ENCODE measurements at regions of chr12 and their contacts with region 1.

Region 1: GRCh38 chr12:48197971-48198671 is 5.0 kb downstream of the OR10AD1 start:
- DNase-seq: peak; percentile 97
- ATAC-seq: peak; percentile 98
- H3K4me3 Mint-ChIP-seq: peak overlapping the region; percentile 80
- H3K27ac Mint-ChIP-seq: peak overlapping the region; percentile 99
- H3K4me1 Mint-ChIP-seq: peaks cover 30% of the 10 kb centered on the region
- H3K27me3 Mint-ChIP-seq: peaks cover 4% of the 10 kb centered on the region

Region 2: DNA sequence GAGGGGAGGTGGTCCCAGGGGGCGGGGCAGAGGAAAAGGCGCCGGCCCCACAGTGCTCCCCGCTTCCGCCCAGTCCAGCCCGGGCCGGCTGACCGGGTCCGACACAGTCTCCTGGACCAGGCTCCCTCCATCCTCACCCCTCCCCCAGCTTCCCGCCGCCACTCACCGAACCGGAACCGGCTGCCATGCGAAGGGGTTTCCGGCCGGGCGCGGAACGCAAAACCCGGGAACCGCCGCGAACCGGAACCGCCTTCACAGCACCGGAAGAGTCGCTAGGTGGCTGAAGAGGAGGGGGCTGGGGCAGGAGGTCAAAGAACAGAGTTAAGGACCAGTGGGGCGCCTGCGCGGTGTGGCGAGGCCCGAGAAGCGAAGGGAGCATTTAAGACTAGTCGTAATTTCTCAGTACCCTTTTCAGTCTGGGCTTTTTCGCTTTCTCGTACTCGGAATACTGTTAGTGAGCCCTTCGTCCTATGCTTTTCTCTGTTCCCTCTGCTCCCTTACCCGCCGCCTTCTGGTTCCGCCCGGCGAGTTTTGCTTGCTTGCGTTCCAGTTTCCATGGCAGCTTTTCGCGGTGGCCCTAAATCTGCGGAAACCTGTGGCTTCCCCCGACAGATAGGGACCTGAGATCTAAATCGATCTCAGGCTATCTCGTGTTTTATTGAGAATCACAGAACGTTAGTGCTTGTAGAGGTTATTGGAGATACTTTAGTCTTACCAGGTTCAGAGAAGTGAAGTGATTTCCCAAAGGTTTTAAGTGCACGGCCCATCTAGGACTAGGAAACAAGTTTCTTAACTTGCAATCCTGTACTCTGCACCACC is 92.0 kb before region 1 on chr12 and contains the start of gene SENP1:
- CTCF ChIA-PET with region 1: interaction called, 3 read pairs
- POLR2A ChIA-PET with region 1: no interaction called
- intact Hi-C with region 1: loop called in 1 of 2 experiments (anchors 1 kb)
- DNase-seq: peak; percentile 94
- ATAC-seq: peak; percentile 87
- H3K4me3 Mint-ChIP-seq: peak within 1 kb of the TSS; percentile 95
- H3K27ac Mint-ChIP-seq: peak within 1 kb of the TSS; percentile 98
- H3K4me1 Mint-ChIP-seq: peaks cover 46% of the 10 kb centered on the region
- H3K27me3 Mint-ChIP-seq: no peaks in the 10 kb centered on the region
- total RNA-seq, gene SENP1: 44.4 to 61.8 TPM

Region 3: GRCh38 chr12:48183091-48183875 is 14.8 kb before region 1 on chr12 and contains the start of gene CCDC184:
- CTCF ChIA-PET with region 1: interaction called, 15 read pairs
- POLR2A ChIA-PET with region 1: interaction called, 3 read pairs
- intact Hi-C with region 1: loop called (anchors 1 to 2 kb)
- DNase-seq: peak; percentile 78
- ATAC-seq: peak; percentile 80
- H3K4me3 Mint-ChIP-seq: peak within 1 kb of the TSS; percentile 81
- H3K27ac Mint-ChIP-seq: peak within 1 kb of the TSS; percentile 31
- H3K4me1 Mint-ChIP-seq: peaks cover 20% of the 10 kb centered on the region
- H3K27me3 Mint-ChIP-seq: peaks cover 34% of the 10 kb centered on the region
- total RNA-seq, gene CCDC184: 0.25 to 0.37 TPM

Region 4: DNA sequence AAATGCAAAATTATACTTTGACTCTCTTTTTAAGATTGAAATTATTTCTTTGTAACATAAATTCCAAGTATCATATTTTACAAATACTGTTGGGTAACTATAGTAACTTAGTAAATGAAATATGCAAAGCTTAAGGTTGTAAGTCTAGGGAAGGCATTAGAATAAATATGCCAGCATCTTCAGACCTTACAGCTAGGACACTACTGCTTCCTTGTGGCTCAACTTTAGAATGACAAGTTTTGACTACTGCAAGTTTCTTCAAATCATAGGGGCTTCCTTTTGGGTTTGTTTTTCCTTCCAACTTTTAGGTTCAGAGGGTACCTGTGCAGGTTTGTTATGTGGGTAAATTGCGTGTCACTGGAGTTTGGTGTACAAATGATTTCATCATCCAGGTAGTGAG is 256.5 kb after region 1 on chr12:
- CTCF ChIA-PET with region 1: interaction called, 3 read pairs
- POLR2A ChIA-PET with region 1: no interaction called
- intact Hi-C with region 1: loop called in 1 of 2 experiments (anchors 5 kb)
- DNase-seq: no peak
- ATAC-seq: no peak
- H3K4me3 Mint-ChIP-seq: no peak overlapping the region
- H3K27ac Mint-ChIP-seq: no peak overlapping the region
- H3K4me1 Mint-ChIP-seq: no peaks in the 10 kb centered on the region
- H3K27me3 Mint-ChIP-seq: peaks cover 8% of the 10 kb centered on the region

Region 5: GRCh38 chr12:48618541-48618940 is 420.4 kb after region 1 on chr12:
- CTCF ChIA-PET with region 1: interaction called, 19 read pairs
- POLR2A ChIA-PET with region 1: no interaction called
- intact Hi-C with region 1: loop called in 1 of 2 experiments (anchors 5 kb)
- DNase-seq: peak; percentile 85
- ATAC-seq: peak; percentile 89
- H3K4me3 Mint-ChIP-seq: no peak overlapping the region
- H3K27ac Mint-ChIP-seq: no peak overlapping the region
- H3K4me1 Mint-ChIP-seq: no peaks in the 10 kb centered on the region
- H3K27me3 Mint-ChIP-seq: peaks cover 30% of the 10 kb centered on the region

Region 6: GRCh38 chr12:48716493-48717251 is 518.6 kb after region 1 on chr12 and contains the start of gene CCNT1:
- CTCF ChIA-PET with region 1: no interaction called
- POLR2A ChIA-PET with region 1: no interaction called
- intact Hi-C with region 1: loop called in 1 of 2 experiments (anchors 1 kb)
- DNase-seq: peak; percentile 100
- ATAC-seq: peak; percentile 95
- H3K4me3 Mint-ChIP-seq: peak within 1 kb of the TSS; percentile 99
- H3K27ac Mint-ChIP-seq: peak within 1 kb of the TSS; percentile 99
- H3K4me1 Mint-ChIP-seq: peaks cover 37% of the 10 kb centered on the region
- H3K27me3 Mint-ChIP-seq: no peaks in the 10 kb centered on the region
- total RNA-seq, gene CCNT1: 82.2 to 85.1 TPM

Measured in activated CD4-positive, alpha-beta T cell treated with anti-CD3 and anti-CD28 coated beads for 36 hours (primary cell).